ENCODE measurements at regions of chr17 and their contacts with region 1.

Region 1: DNA sequence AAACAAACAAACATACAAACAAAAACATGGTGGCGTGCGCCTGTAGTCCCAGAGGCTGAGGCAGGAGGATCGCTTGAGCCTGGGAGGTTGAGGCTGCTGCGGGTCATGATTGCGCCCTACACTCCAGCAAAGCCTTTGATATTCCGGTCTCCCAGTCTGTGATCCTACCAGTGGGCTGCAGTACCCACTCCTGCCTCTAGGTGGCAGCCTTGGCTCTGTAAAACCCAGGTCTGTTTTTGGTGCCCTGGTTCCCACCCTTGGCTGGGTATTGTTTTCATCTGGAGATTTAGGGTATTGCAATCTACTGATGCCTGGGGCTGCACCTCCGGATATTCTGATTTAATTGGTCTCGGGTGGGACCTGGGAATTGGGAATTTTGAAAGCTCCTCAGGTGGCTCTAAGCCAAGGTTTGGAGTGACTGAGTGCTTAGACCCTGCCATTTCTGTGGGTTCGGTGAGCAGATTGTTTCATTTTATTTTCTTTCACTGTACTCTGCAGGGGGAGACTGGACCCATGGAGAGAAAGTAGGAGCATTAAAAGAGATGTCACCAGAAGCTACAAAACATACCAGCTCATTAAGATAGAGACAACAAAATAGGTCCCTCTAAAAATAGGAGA is 40.5 kb downstream of the MYH3 start:
- DNase-seq: peak; percentile 80 to 81
- H3K4me3 ChIP-seq: no peak overlapping the region
- H3K27ac ChIP-seq: no peak overlapping the region
- H3K4me1 ChIP-seq: no peaks in the 10 kb centered on the region
- H3K27me3 ChIP-seq: no peaks in the 10 kb centered on the region
- CTCF ChIP-seq: peak; percentile 80 to 99 (median 91)
- POLR2A ChIP-seq: no peak

Region 2: GRCh38 chr17:10327640-10328039 is 289.0 kb before region 1 on chr17:
- intact Hi-C with region 1: loop called (anchors 2 kb)
- DNase-seq: peak; percentile 88 to 89
- H3K4me3 ChIP-seq: no peak overlapping the region
- H3K27ac ChIP-seq: no peak overlapping the region
- H3K4me1 ChIP-seq: no peaks in the 10 kb centered on the region
- H3K27me3 ChIP-seq: no peaks in the 10 kb centered on the region
- CTCF ChIP-seq: peak; percentile 80 to 92 (median 86)
- POLR2A ChIP-seq: no peak